ENCODE measurements at regions of chr14 and their contacts with region 1.

Region 1: DNA sequence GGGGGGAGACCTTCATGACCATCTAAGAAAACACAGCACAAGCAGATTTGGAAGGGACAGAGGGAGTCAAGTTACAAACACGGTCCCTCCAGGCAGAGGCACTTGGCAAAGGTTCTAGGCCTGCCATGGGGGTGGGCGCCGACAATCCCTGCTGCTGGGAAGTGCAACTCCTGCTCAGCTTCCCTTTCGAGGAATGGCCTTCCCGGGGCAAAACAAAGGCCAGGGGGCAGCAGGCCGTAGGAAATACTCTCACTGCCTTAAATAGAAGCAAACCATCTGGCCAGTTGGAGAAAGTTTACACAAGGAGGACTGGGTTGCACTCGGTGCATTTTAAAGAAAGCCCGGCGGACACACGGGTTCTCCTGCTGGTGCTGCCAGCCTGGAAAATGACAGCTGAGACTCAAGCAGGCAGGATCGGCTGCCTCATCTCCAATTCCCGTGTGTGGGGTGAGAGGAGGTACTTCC is 65.8 kb downstream of the ITPK1 start:
- DNase-seq: peak; percentile 62 to 64
- ATAC-seq: peak; percentile 82
- H3K4me3 ChIP-seq: peak overlapping the region in 1 of 4 donors; percentile 9
- H3K27ac ChIP-seq: peak overlapping the region in 3 of 4 donors; percentile 64 to 76 (median 71)
- H3K4me1 ChIP-seq: peaks cover 26 to 29% of the 10 kb centered on the region in 2 donors
- H3K27me3 ChIP-seq: no peaks in the 10 kb centered on the region
- CTCF ChIP-seq: no peak
- POLR2A ChIP-seq: no peak

Region 2: DNA sequence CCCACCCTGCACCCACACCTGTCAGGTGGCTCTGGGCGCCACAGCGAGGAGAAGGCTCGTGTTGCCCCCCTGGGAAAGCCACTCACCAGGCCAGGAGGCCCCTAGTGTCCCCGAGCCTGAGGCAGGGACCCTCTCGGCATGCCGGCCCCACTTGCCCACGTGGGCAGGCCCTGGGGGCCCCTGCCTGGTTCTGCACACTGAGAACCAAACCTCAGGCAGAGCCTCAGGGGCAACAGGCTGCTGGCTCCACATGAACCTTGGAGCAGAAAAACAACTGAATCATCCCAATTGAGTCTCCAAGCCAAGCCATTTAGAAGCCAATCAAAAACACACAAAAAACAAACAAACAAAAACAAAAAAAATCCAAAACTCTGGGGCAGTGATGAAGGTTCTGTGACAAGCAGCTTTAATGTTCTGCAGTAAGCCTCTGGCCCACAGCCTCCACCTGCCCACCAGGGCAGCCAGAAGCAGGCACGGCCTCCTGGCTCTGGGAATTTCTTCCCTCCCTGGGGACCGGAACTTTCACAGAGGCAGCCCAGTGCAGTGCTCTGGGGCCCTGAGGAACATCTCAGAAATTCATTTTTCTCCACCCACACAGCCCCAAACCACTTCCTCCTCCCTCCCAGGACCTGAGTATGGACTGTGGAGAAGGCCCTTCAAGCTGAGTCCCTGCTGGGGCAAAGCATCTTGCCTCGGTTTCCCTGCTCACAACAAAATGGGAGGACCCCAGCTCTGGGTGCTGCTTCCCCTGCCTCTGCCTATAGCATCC is 36.8 kb before region 1 on chr14:
- in situ Hi-C with region 1: no loop called
- intact Hi-C with region 1: loop called (anchors 2 kb)
- DNase-seq: no peak
- ATAC-seq: no peak
- H3K4me3 ChIP-seq: no peak overlapping the region
- H3K27ac ChIP-seq: peak overlapping the region in 2 of 4 donors; percentile 4
- H3K4me1 ChIP-seq: peaks cover 79 to 80% of the 10 kb centered on the region in 2 donors
- H3K27me3 ChIP-seq: no peaks in the 10 kb centered on the region
- CTCF ChIP-seq: no peak
- POLR2A ChIP-seq: no peak